PC-3 (cell line): ENCODE measurements at regions of chr1 and their contacts with region 1.

Region 1: GRCh38 chr1:244214009-244214967 is 163.2 kb downstream of the ZBTB18 start:
- DNase-seq: peak; percentile 90
- ATAC-seq: peak; percentile 50
- H3K4me3 ChIP-seq: no peak overlapping the region
- H3K27ac ChIP-seq: peak overlapping the region; percentile 45
- H3K4me1 ChIP-seq: peaks cover 25% of the 10 kb centered on the region
- H3K27me3 ChIP-seq: no peaks in the 10 kb centered on the region
- CTCF ChIP-seq: no peak

Region 2: GRCh38 chr1:244074559-244075171 is 139.6 kb before region 1 on chr1:
- CTCF ChIA-PET with region 1: no interaction called
- POLR2A ChIA-PET with region 1: no interaction called
- intact Hi-C with region 1: loop called (anchors 5 kb)
- DNase-seq: no peak
- ATAC-seq: peak; percentile 37
- H3K4me3 ChIP-seq: no peak overlapping the region
- H3K27ac ChIP-seq: no peak overlapping the region
- H3K4me1 ChIP-seq: peaks cover 9% of the 10 kb centered on the region; the same call in 1 of the 2 replicates
- H3K27me3 ChIP-seq: no peaks in the 10 kb centered on the region
- CTCF ChIP-seq: no peak

Region 3: GRCh38 chr1:244197906-244198305 is 16.4 kb before region 1 on chr1:
- CTCF ChIA-PET with region 1: no interaction called
- POLR2A ChIA-PET with region 1: no interaction called
- intact Hi-C with region 1: no loop called
- DNase-seq: peak; percentile 32
- ATAC-seq: no peak
- H3K4me3 ChIP-seq: no peak overlapping the region
- H3K27ac ChIP-seq: no peak overlapping the region
- H3K4me1 ChIP-seq: 0 out of 2 replicates have a peak, but pooled peaks cover 8% of the 10 kb centered on the region
- H3K27me3 ChIP-seq: no peaks in the 10 kb centered on the region
- CTCF ChIP-seq: no peak

Region 4: DNA sequence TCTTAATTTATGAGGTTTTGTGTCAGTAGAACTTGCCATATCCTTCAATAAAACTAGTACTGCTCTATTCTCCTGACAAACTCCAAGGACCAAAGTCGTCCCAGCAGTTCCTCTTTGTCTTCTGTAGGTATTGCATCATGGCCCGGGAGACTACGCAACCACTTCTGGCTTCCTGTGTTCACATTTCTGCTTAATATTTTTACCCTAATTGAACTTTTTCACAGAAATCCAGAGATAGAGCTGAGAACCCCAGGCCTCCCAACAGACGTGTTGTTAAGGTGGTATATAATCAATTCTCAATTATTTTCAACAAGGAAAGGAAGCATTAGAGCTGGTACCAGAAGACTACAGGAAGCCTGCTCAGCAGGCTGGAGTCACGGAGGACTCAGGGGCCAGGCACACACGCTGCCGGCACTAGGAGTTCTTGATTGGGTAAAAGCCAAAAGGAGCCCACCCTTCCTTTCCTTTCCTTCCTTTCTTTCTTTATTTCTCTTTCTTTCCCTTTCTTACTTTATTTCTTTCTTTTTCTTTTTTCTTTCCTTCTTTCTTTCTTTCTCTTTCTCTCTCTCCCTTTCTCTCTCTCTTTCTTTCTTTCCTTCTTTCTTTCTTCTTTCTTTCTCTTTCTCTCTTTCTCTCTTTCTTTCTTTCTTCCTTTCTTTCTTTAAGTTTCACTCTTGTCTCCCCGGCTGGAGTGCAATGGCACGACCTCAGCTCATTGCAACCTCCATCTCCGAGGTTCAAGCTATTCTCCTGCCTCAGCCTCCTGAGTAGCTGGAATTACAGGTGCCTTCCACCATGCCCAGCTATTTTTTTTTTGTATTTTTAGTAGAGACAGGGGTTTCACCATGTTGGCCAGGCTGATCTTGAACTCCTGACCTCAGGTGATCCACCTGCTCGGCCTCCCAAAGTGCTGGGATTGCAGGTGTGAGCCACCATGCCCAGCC is 10.5 kb after region 1 on chr1:
- CTCF ChIA-PET with region 1: interaction called, 3 read pairs
- POLR2A ChIA-PET with region 1: no interaction called
- intact Hi-C with region 1: loop called (anchors 2 kb)
- DNase-seq: no peak
- ATAC-seq: no peak
- H3K4me3 ChIP-seq: no peak overlapping the region
- H3K27ac ChIP-seq: no peak overlapping the region
- H3K4me1 ChIP-seq: peaks cover 17% of the 10 kb centered on the region
- H3K27me3 ChIP-seq: no peaks in the 10 kb centered on the region
- CTCF ChIP-seq: no peak

Region 5: GRCh38 chr1:244273845-244274619 is 59.7 kb after region 1 on chr1:
- CTCF ChIA-PET with region 1: no interaction called
- POLR2A ChIA-PET with region 1: no interaction called
- intact Hi-C with region 1: no loop called
- DNase-seq: peak; percentile 96
- ATAC-seq: peak; percentile 92
- H3K4me3 ChIP-seq: peak overlapping the region; percentile 60
- H3K27ac ChIP-seq: peak overlapping the region; percentile 94
- H3K4me1 ChIP-seq: peaks cover 26% of the 10 kb centered on the region
- H3K27me3 ChIP-seq: no peaks in the 10 kb centered on the region
- CTCF ChIP-seq: no peak